ENCODE measurements at regions of chr2 and their contacts with region 1.

Region 1: GRCh38 chr2:177332041-177332991 is 60.3 kb upstream of the AGPS start:
- H3K4me3 ChIP-seq: no peak overlapping the region
- H3K27ac ChIP-seq: no peak overlapping the region
- H3K4me1 ChIP-seq: no peaks in the 10 kb centered on the region
- CTCF ChIP-seq: peak; percentile 72

Region 2: GRCh38 chr2:177263451-177264208 is 68.7 kb before region 1 on chr2:
- CTCF ChIA-PET with region 1: interaction called, 13 read pairs
- POLR2A ChIA-PET with region 1: no interaction called
- H3K4me3 ChIP-seq: peak overlapping the region; percentile 95
- H3K27ac ChIP-seq: peak overlapping the region; percentile 96
- H3K4me1 ChIP-seq: peaks cover 12% of the 10 kb centered on the region
- CTCF ChIP-seq: peak; percentile 99

Region 3: DNA sequence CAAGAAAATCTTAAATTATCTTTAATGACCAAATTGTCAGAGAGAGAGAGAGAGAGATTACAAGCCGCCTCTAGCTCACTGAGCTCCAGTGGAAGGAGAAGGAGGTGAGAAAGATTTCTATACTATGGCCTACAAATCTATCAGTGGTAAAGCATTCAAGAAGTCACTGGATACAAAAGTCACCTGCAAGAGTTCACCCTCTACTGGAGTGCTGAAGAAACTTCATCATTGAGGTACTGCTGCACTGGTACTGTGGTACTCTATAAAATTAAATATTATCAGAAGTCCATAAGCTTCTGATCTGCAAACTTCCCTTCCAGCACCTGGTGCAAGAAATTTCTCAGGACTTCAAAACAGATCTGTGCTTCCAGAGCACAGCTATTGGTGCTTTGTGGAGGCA is 12.0 kb after region 1 on chr2:
- CTCF ChIA-PET with region 1: interaction called, 22 read pairs
- POLR2A ChIA-PET with region 1: no interaction called
- H3K4me3 ChIP-seq: no peak overlapping the region
- H3K27ac ChIP-seq: no peak overlapping the region
- H3K4me1 ChIP-seq: no peaks in the 10 kb centered on the region
- CTCF ChIP-seq: no peak

Region 4: GRCh38 chr2:177405029-177405692 is 72.8 kb after region 1 on chr2:
- CTCF ChIA-PET with region 1: interaction called, 11 read pairs
- POLR2A ChIA-PET with region 1: no interaction called
- H3K4me3 ChIP-seq: no peak overlapping the region
- H3K27ac ChIP-seq: no peak overlapping the region
- H3K4me1 ChIP-seq: peaks cover 13% of the 10 kb centered on the region
- CTCF ChIP-seq: no peak

Region 5: DNA sequence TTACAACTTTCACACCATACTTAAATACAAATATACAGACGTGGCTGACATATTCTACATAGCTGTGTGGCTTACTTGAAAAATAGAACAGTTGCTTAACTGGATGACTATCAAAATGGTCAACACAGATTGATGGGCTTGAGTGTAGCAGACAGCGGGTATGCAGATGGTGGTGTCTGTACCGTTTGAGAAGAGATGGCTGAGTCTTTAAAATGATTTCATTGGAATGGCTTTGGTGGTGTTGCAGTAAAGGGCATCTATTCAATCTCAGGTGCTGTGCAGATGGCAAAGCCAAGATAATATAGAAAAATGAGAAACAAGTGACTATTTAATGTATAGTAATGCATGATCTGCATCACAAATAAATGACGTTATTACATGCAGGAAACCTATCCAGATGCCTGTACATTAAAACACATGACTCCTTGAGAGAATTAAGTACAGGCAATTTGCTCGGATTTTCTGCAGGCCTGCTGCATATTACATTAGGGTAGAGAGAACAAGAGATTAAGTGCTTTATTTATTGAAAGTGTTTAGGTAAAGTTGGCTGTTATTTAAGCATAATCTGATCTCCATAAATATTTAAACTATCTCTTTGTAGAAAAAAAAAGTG is 128.8 kb after region 1 on chr2:
- CTCF ChIA-PET with region 1: no interaction called
- POLR2A ChIA-PET with region 1: no interaction called
- H3K4me3 ChIP-seq: no peak overlapping the region
- H3K27ac ChIP-seq: no peak overlapping the region
- H3K4me1 ChIP-seq: no peaks in the 10 kb centered on the region
- CTCF ChIP-seq: no peak

Region 6: GRCh38 chr2:177489719-177490301 is 157.5 kb after region 1 on chr2:
- CTCF ChIA-PET with region 1: interaction called, 14 read pairs
- POLR2A ChIA-PET with region 1: no interaction called
- H3K4me3 ChIP-seq: no peak overlapping the region
- H3K27ac ChIP-seq: no peak overlapping the region
- H3K4me1 ChIP-seq: no peaks in the 10 kb centered on the region
- CTCF ChIP-seq: no peak

Region 7: GRCh38 chr2:177724398-177725287 is 392.3 kb after region 1 on chr2:
- CTCF ChIA-PET with region 1: interaction called, 54 read pairs
- POLR2A ChIA-PET with region 1: no interaction called
- H3K4me3 ChIP-seq: no peak overlapping the region
- H3K27ac ChIP-seq: no peak overlapping the region
- H3K4me1 ChIP-seq: no peaks in the 10 kb centered on the region; the same call in 1 of the 2 replicates
- CTCF ChIP-seq: peak; percentile 77

Region 8: DNA sequence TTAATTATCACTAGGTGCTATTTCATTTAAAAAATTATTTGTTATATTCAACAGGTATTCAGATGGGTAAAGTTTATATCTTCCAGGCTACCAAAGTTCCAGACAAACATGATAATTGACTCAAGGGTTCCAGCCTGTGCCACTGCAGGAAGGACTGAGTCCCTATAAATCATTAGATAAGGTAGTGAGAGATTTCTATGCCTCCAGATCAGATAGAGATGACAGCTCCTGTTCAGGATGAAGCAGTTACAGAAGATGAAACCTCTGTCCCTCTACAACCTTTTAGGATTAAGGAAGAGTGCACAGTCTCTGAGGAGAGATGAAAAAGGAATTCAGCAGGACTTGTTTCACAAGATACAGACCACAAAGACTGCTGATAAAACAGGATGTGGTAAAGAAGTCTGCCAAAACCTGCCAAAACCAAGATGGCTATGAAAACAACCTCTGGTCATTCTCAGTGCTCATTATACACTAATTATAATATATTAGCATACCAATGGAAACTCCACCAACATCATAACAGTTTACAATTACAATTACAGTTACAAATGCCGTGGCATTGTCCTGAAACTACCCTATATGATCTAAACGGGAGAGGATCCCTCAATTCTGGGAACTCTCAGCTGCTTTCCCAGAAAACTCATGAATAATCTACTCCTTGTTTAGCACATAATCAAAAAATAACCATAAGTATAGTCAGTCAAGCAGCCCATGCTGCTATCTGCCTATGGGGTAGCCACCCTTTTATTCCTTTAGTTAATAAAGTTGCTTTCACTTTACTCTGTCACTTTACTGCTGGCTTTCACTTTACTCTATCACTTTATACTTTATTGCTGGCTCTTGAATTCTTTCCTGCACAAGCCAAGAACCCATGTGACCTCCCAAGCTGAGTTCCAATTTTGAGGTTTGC is 451.8 kb after region 1 on chr2:
- CTCF ChIA-PET with region 1: no interaction called
- POLR2A ChIA-PET with region 1: no interaction called
- H3K4me3 ChIP-seq: no peak overlapping the region
- H3K27ac ChIP-seq: no peak overlapping the region
- H3K4me1 ChIP-seq: peaks cover 4% of the 10 kb centered on the region; the same call in 1 of the 2 replicates
- CTCF ChIP-seq: no peak